ENCODE measurements at regions of chr3 and their contacts with region 1.

Region 1: DNA sequence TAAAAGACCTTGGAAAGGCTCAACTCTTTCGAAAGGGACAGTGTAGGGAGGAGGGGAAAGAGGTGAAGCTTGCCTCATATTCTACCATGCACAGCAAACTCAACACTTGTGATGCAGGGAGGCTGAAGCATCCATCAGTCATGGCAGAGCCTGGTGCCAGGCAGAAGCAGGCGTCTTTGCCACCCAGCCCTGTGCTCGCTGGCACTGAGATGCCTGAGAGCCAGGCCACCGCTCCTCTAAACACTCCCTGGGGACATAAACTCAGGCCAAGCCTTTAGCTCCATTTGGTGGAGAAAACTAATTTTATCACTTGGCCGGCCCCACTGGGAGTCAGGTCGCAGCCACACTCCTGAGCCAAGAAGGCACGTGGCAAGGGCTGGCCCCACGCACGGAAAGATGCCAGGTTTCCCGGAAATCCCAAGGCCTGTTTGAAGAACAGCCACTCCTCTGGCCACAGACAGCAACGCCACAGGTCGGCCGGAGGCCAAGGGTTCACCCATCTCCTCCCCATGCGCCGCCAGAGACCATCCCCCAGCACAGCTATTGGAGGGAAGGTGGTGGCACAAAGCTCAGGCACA is 30.7 kb downstream of the XXYLT1 start:
- DNase-seq: peak; percentile 8 to 29
- H3K4me3 ChIP-seq: no peak overlapping the region
- H3K27ac ChIP-seq: no peak overlapping the region
- H3K4me1 ChIP-seq: peaks cover 0 to 9% of the 10 kb centered on the region in 2 donors
- H3K27me3 ChIP-seq: no peaks in the 10 kb centered on the region
- CTCF ChIP-seq: no peak
- POLR2A ChIP-seq: no peak

Region 2: GRCh38 chr3:195133462-195133861 is 106.8 kb before region 1 on chr3:
- intact Hi-C with region 1: loop called (anchors 10 kb)
- DNase-seq: no peak
- H3K4me3 ChIP-seq: no peak overlapping the region
- H3K27ac ChIP-seq: no peak overlapping the region
- H3K4me1 ChIP-seq: peaks cover 0 to 1% of the 10 kb centered on the region in 2 donors
- H3K27me3 ChIP-seq: no peaks in the 10 kb centered on the region
- CTCF ChIP-seq: no peak
- POLR2A ChIP-seq: no peak

Measured in thyroid gland (tissue), 4 donors.